ENCODE measurements at regions of chr12 and their contacts with region 1.

Region 1: GRCh38 chr12:92396647-92397252 is 251.1 kb upstream of the BTG1 start:
- DNase-seq: no peak
- ATAC-seq: no peak
- H3K4me3 ChIP-seq: no peak overlapping the region
- H3K4me3 Mint-ChIP-seq: peak overlapping the region in 8 of 10 donors; percentile 9 to 76 (median 62)
- H3K27ac ChIP-seq: peak overlapping the region; percentile 85
- H3K27ac Mint-ChIP-seq: peak overlapping the region; percentile 90 to 100 (median 98)
- H3K4me1 ChIP-seq: peaks cover 76 to 84% of the 10 kb centered on the region in 2 donors
- H3K4me1 Mint-ChIP-seq: peaks cover 56 to 100% (median 93%) of the 10 kb centered on the region in 7 donors
- H3K27me3 ChIP-seq: no peaks in the 10 kb centered on the region
- H3K27me3 Mint-ChIP-seq: no peaks in the 10 kb centered on the region

Region 2: GRCh38 chr12:91743280-91743679 is 653.5 kb before region 1 on chr12:
- CTCF ChIA-PET with region 1: no interaction called
- POLR2A ChIA-PET with region 1: no interaction called
- intact Hi-C with region 1: no loop called
- DNase-seq: no peak
- ATAC-seq: no peak
- H3K4me3 ChIP-seq: no peak overlapping the region
- H3K4me3 Mint-ChIP-seq: no peak overlapping the region
- H3K27ac ChIP-seq: no peak overlapping the region
- H3K27ac Mint-ChIP-seq: no peak overlapping the region
- H3K4me1 ChIP-seq: no peaks in the 10 kb centered on the region
- H3K4me1 Mint-ChIP-seq: peaks cover 0 to 2% (median 0%) of the 10 kb centered on the region in 7 donors
- H3K27me3 ChIP-seq: no peaks in the 10 kb centered on the region
- H3K27me3 Mint-ChIP-seq: no peaks in the 10 kb centered on the region

Region 3: DNA sequence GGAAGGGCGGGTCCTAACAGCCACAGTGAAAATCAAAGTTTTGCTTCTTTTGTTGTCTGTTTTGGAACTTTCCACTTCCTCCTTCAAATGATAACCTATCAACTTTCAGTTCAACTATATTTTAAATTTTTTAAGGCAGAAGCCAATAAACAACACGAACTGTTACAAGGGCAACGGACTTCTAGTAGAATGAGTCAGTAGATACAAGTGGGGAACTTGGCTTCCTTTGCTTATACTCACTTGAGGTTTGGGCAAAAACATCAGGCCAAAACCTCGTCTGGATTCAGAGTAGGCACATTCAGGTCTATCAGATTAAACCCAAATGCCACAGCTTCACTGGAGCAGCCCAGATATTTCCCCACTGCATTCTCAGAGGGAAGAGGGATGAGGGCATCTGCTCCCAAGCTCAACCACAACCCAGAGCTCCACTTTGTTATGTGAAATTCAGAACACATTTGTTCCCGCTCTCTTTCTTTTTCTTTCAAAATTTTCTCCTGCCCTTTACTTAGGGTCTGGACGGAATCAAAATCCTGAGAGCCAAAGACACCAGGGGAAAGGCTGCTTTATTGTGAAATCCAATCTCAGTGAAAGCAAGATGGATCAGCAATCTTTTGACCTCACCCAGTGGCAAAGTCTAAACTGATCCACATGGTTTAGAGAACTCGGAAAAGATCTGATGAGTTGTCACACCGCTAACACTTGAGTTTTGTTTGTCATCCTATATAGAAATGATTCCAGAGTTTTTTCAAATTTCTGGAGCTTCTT is 98.6 kb before region 1 on chr12:
- CTCF ChIA-PET with region 1: no interaction called
- POLR2A ChIA-PET with region 1: interaction called, 11 read pairs
- intact Hi-C with region 1: loop called (anchors 1 to 5 kb)
- DNase-seq: peak in 7 of 9 donors; percentile 29 to 75 (median 58)
- ATAC-seq: peak; percentile 83
- H3K4me3 ChIP-seq: no peak overlapping the region
- H3K4me3 Mint-ChIP-seq: peak overlapping the region in 9 of 10 donors; percentile 9 to 80 (median 63)
- H3K27ac ChIP-seq: peak overlapping the region; percentile 57
- H3K27ac Mint-ChIP-seq: peak overlapping the region in 2 of 9 donors; percentile 85 to 96
- H3K4me1 ChIP-seq: peaks cover 17 to 42% of the 10 kb centered on the region in 2 donors
- H3K4me1 Mint-ChIP-seq: peaks cover 8 to 33% (median 27%) of the 10 kb centered on the region in 7 donors
- H3K27me3 ChIP-seq: no peaks in the 10 kb centered on the region
- H3K27me3 Mint-ChIP-seq: no peaks in the 10 kb centered on the region

Region 4: GRCh38 chr12:92341065-92341668 is 55.6 kb before region 1 on chr12:
- CTCF ChIA-PET with region 1: no interaction called
- POLR2A ChIA-PET with region 1: no interaction called
- intact Hi-C with region 1: loop called in 1 of 2 experiments (anchors 5 kb)
- DNase-seq: peak in 3 of 9 donors; percentile 23 to 32 (median 28)
- ATAC-seq: peak; percentile 79
- H3K4me3 ChIP-seq: peak overlapping the region; percentile 5
- H3K4me3 Mint-ChIP-seq: peak overlapping the region; percentile 14 to 79 (median 69)
- H3K27ac ChIP-seq: peak overlapping the region; percentile 51
- H3K27ac Mint-ChIP-seq: peak overlapping the region; percentile 35 to 90 (median 83)
- H3K4me1 ChIP-seq: peaks cover 0 to 11% of the 10 kb centered on the region in 2 donors
- H3K4me1 Mint-ChIP-seq: peaks cover 2 to 38% (median 20%) of the 10 kb centered on the region in 7 donors
- H3K27me3 ChIP-seq: no peaks in the 10 kb centered on the region
- H3K27me3 Mint-ChIP-seq: no peaks in the 10 kb centered on the region

Region 5: DNA sequence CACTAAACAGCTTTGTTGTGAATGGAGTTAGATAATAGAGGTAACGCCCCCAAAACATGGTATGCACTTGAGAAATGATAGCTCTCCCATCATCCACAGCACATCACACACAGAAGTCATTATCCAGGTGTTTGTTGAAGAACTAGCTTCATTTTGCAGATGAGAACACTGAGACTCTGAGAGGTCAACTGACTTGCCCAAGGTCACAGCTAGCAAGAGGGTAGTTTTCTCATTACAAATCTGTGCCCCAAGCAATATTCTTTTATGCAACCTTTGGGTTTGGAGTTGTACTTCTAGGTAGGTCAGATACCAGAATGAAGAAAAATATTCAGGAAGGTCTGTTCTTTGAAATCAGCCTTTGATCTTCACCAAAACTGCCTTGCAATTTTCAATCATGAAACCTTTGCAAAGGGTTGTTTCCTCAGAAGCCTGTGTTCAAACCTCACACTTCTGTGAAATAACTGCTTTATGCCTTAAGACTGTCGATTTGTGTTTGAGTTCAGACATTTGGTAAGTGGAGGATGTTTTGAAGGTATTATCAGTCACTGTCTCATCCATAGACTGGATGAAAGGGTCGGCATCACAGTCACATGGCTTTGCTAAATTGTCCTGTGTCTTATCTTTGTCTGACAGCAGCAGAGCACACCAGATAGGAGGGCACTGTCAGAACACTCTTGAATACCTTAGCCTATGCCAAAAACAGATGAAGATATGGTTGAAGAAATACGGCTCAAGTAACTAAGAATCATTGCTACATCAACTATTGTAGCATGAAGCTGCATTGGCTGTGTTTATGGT is 17.9 kb before region 1 on chr12:
- CTCF ChIA-PET with region 1: no interaction called
- POLR2A ChIA-PET with region 1: interaction called, 8 read pairs
- intact Hi-C with region 1: loop called (anchors 1 kb)
- DNase-seq: peak in 7 of 9 donors; percentile 44 to 73 (median 65)
- ATAC-seq: peak; percentile 90
- H3K4me3 ChIP-seq: no peak overlapping the region
- H3K4me3 Mint-ChIP-seq: peak overlapping the region; percentile 8 to 74 (median 62)
- H3K27ac ChIP-seq: peak overlapping the region; percentile 64
- H3K27ac Mint-ChIP-seq: peak overlapping the region; percentile 87 to 96 (median 93)
- H3K4me1 ChIP-seq: peaks cover 8 to 52% of the 10 kb centered on the region in 2 donors
- H3K4me1 Mint-ChIP-seq: peaks cover 31 to 91% (median 87%) of the 10 kb centered on the region in 7 donors
- H3K27me3 ChIP-seq: no peaks in the 10 kb centered on the region
- H3K27me3 Mint-ChIP-seq: no peaks in the 10 kb centered on the region

Region 6: DNA sequence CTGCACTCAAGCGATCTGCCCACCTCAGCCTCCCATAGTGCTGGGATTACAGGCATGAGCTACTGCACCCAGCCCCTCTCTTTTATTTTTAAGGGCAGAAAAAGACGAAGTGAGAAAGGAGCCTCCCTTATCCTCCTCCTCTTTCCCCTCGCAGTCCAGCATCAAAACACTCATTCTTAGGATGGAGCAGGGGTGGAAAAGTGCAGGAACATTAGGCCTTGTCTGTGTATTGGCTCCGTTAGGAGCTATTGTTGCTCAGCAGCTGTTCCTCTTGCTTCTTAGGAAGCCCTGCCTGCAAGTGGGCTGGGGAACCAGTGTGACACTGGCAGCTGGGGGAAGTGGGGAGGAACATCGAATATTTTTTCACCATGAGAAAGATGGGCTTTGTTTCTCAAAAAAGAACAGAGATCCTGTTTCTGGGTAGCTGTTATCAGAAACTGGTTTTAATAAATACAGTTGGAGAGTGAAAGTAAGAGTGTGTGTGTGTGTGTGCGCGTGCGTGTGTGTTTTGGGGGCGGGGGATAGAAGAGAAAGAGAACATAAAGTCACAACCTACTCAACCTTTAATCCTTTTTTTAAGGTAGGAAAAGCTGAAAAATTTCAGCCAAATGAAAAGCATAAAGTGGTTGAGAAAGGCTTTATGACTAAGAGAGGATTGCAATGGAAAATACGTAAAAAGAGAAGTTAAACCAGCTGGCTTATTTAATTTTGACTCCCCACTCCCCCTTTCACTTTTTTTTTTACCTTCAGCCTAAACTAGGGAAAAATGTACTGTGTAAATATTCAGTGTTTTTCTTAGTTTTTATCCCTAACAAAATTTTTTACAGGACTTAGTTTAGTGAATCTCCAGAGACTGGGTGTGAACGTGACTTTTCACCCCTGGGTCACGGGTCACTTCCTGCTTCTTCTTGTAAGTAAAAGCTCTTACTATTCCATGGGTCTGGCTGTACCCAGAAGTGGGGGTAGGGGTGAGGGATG is 108.8 kb after region 1 on chr12:
- CTCF ChIA-PET with region 1: no interaction called
- POLR2A ChIA-PET with region 1: interaction called, 12 read pairs
- intact Hi-C with region 1: loop called (anchors 2 kb)
- DNase-seq: peak; percentile 11 to 71 (median 50)
- ATAC-seq: peak; percentile 66
- H3K4me3 ChIP-seq: peak overlapping the region; percentile 48
- H3K4me3 Mint-ChIP-seq: peak overlapping the region; percentile 80 to 93 (median 87)
- H3K27ac ChIP-seq: peak overlapping the region; percentile 73
- H3K27ac Mint-ChIP-seq: peak overlapping the region; percentile 89 to 99 (median 96)
- H3K4me1 ChIP-seq: peaks cover 17 to 28% of the 10 kb centered on the region in 2 donors
- H3K4me1 Mint-ChIP-seq: peaks cover 15 to 48% (median 30%) of the 10 kb centered on the region in 7 donors
- H3K27me3 ChIP-seq: no peaks in the 10 kb centered on the region
- H3K27me3 Mint-ChIP-seq: no peaks in the 10 kb centered on the region

Region 7: DNA sequence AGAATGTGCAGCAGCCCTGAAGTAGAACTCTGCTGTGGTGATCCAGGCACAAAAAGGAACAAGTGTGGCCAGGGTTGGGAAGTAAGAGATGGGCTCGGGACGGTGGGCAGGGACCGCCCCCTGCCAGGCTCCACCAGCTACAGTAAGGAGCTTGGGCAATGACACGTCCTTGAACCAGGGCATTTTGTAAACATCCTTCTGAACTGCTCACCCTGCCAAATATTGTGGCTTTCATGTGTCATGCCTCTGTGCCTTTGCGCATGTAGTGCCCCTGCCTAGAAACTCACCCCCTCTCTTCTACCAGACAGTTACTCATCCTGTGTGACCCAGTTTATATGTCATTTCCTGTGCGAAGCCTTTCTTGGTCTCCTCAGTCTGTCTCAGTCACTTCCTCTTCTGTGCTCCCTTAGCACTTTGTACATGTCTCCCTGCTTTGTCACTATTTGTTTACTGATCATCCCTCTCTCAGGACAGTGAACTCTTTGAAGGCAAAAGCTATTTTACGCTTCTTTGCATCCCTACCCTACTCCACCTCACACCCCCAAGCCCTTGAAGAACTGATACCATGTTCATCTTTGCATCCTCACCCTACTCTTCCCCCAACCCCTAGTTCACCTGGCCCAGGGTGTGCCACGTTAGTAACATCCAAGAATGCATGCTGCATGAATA is 197.1 kb after region 1 on chr12:
- CTCF ChIA-PET with region 1: no interaction called
- POLR2A ChIA-PET with region 1: interaction called, 7 read pairs
- intact Hi-C with region 1: loop called in 1 of 2 experiments (anchors 1 kb)
- DNase-seq: peak; percentile 51 to 97 (median 92)
- ATAC-seq: peak; percentile 95
- H3K4me3 ChIP-seq: peak overlapping the region; percentile 16
- H3K4me3 Mint-ChIP-seq: peak overlapping the region; percentile 22 to 83 (median 72)
- H3K27ac ChIP-seq: peak overlapping the region; percentile 86
- H3K27ac Mint-ChIP-seq: peak overlapping the region; percentile 90 to 100 (median 98)
- H3K4me1 ChIP-seq: peaks cover 27 to 30% of the 10 kb centered on the region in 2 donors
- H3K4me1 Mint-ChIP-seq: peaks cover 23 to 74% (median 44%) of the 10 kb centered on the region in 7 donors
- H3K27me3 ChIP-seq: no peaks in the 10 kb centered on the region
- H3K27me3 Mint-ChIP-seq: no peaks in the 10 kb centered on the region